HEK293T (cell line): ENCODE measurements at regions of chr12 and their contacts with region 1.

Region 1: DNA sequence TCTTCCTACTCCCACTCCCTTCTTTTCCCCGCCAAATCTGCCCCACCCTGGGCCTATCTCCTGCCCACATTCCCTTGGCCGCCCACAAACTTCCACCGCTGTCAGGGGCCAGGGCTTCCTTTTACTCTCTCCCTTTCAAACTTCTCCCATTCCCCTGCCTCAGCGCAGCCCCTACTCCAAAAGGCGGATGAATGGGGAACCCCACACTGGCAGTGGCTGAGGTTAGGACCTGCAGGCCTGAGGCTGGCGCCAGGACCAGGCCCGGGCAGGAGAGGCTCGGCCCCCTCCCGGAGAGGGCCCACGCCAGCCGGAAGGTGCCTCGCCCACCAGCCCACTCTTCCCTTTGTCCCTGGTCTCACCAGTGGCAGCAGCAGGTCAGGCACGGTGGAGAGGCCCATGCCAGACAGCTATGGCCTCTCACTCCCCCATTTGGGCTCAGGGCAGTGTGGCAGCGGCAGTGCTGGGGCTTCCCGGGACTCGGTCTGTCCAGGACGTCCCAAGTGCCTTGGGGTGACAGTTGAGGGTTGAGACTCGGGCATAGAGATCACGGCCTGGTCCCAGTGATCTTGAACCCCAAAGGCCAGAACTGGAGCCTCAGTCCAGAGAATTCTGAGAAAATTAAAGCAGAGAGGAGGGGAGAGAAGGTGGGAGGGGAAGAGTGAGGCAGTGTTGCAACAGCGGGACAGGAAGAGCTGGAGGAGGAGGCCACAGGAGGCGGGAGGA is at the start of gene TNFRSF1A:
- DNase-seq: peak; percentile 75

Region 2: GRCh38 chr12:6263931-6264330 is 77.6 kb before region 1 on chr12:
- CTCF ChIA-PET with region 1: no interaction called
- POLR2A ChIA-PET with region 1: no interaction called
- DNase-seq: peak; percentile 44

Region 3: DNA sequence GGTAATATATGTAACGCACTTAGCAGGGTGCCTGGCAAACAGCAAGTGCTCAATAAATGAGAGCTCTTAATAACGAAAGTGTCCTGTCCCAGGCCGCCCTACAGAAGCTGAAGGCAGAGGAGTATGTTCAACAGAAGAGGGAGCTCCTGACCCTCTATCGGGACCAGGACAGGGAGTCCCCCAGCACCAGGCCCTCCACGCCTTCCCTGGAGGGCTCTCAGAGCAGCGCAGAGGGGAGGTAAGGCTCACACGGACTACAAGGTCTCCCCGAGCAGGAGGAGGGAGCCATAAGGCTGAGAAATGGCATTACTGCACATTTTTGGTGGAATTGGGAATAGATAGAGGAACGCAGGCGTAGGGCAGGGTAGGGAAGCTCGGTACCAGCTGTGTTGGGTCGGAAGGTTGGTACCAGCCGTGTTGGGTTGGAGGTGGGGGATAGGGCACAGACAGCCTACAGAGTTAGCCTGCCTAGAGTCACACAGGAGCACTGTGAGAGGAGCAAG is 15.2 kb before region 1 on chr12:
- CTCF ChIA-PET with region 1: interaction called, 28 read pairs
- POLR2A ChIA-PET with region 1: interaction called, 22 read pairs
- DNase-seq: peak; percentile 77

Region 4: GRCh38 chr12:6355491-6356371 is 14.2 kb after region 1 on chr12:
- CTCF ChIA-PET with region 1: interaction called, 11 read pairs
- POLR2A ChIA-PET with region 1: interaction called, 13 read pairs
- DNase-seq: no peak

Region 5: DNA sequence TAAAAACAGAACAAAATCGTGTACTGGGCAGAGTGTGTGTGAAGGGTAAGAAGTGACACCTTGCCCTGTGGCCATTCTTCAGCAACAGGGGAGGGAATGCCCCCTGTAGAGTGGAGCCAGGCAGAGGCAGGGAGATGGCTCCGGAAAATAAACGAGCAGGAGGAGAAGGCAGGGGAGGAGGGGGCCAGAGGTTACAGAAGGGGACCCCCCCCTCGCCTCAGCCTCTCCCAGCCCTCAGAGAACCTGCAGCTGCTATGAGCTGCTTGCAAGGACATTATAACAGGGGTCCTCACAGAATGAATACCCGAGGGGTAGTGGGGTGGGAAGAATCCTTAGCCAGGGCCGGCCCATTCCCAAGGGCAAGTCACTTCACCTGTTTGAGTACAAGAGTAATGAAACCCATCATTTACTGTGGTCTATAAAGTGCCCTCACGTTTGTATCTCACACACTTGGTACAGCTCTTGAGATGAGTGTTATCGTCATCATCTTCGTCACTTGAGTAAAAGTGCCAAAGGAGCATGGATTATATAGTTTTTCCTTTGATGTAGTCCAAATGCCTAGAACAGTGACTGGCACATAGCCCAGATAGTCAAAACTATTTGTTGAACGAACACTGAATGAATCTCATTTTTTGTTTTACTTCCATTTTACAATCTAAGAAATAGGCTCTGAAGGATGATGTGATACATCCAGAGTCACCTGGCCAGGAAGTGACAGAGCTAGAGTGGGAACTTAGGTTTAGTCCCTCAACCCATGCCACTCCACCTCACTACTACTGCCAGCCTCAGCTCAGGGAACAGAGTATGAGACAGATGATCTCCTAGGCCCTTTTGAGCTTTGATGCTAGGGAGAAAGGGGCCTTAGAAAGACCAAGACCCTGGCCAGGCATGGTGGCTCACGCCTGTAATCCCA is 19.3 kb after region 1 on chr12:
- CTCF ChIA-PET with region 1: interaction called, 11 read pairs
- POLR2A ChIA-PET with region 1: interaction called, 19 read pairs
- DNase-seq: no peak

Region 6: DNA sequence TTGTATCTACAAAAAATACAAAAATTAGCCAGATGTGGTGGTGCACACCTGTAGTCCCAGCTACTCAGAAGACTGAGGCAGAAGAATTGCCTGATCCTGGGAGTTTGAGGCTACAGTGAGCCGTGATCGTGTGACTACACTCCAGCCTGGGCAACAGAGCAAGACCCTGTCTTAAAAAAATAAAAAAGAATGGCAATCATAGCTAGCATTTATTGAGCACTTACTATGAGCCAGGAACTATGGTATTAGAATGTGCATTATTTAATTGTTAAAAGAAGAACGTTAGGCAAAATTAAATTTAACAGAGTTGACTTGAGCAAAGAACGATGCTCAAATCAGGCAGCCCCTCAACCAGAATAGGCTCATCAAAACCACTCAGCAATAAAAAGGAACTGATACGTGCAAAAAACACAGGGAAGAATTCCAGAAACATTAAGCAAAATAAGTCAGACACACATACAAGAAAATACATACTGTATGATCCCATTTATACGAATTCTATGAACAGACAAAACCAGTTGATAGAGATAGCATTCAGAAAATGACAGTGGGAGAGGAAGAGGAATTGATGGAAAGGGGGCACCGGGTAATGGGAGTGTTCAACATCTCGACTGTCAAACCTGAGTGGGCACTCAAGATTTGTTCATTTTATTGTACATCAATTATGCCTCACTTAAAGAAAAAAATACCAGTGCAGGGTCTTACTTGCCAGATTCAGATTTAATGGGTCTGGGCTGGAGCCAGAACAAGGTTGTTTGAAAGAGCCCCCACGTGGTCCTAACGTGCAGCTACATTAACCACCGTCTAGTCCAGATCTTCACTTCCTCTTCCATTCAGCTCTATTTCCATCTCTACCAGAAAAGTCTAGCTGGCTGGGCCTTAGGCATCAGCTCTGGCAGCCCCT is 25.7 kb after region 1 on chr12:
- CTCF ChIA-PET with region 1: interaction called, 14 read pairs
- POLR2A ChIA-PET with region 1: interaction called, 19 read pairs
- DNase-seq: peak; percentile 59

Region 7: GRCh38 chr12:6376079-6376869 is 34.7 kb after region 1 on chr12:
- CTCF ChIA-PET with region 1: interaction called, 3 read pairs
- POLR2A ChIA-PET with region 1: interaction called, 17 read pairs
- DNase-seq: peak; percentile 75